PC-9 (cell line): ENCODE measurements at regions of chr6 and their contacts with region 1.

Region 1: GRCh38 chr6:53348371-53349208 is at the start of gene ELOVL5:
- DNase-seq: peak; percentile 81 to 93
- H3K4me3 ChIP-seq: peak within 1 kb of the TSS; percentile 73
- H3K27ac ChIP-seq: peak within 1 kb of the TSS; percentile 54
- H3K4me1 ChIP-seq: peaks cover 20% of the 10 kb centered on the region
- H3K27me3 ChIP-seq: no peaks in the 10 kb centered on the region
- CTCF ChIP-seq: no peak
- total RNA-seq, gene ELOVL5: 71.3 and 108 TPM in 2 replicates

Region 2: DNA sequence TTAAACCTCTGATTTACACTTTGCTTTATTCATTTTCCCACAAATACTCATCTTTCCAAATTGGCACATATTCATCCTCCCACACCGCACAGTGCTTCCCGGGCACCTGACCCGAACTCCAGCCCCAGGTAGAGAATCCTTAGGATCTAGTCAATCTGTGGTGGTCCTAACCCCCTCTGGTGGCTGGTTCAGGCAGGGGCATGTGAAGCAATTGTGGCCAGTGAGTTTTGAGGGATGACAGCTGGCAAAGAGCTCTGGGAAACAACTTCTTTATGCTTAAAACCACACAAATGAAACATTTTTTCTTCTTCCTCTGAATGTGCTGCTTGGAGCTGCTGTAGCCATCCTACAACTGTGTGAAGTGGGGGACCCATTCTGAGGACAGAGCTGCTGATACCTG is 54.5 kb before region 1 on chr6:
- CTCF ChIA-PET with region 1: no interaction called
- POLR2A ChIA-PET with region 1: no interaction called
- intact Hi-C with region 1: loop called (anchors 2 kb)
- DNase-seq: no peak
- H3K4me3 ChIP-seq: no peak overlapping the region
- H3K27ac ChIP-seq: no peak overlapping the region
- H3K4me1 ChIP-seq: peaks cover 7% of the 10 kb centered on the region; the same call in 1 of the 2 replicates
- H3K27me3 ChIP-seq: no peaks in the 10 kb centered on the region
- CTCF ChIP-seq: peak; percentile 60